ENCODE measurements at regions of chr1 and their contacts with region 1.

Region 1: GRCh38 chr1:205658943-205659581 is 21.2 kb downstream of the SLC45A3 start:
- DNase-seq: no peak
- H3K4me3 ChIP-seq: no peak overlapping the region
- H3K27ac ChIP-seq: no peak overlapping the region
- H3K4me1 ChIP-seq: peaks cover 5 to 7% (median 7%) of the 10 kb centered on the region in 4 donors
- H3K27me3 ChIP-seq: no peaks in the 10 kb centered on the region
- CTCF ChIP-seq: peak; percentile 75 to 95 (median 84)
- EP300 ChIP-seq: no peak
- POLR2A ChIP-seq: no peak

Region 2: DNA sequence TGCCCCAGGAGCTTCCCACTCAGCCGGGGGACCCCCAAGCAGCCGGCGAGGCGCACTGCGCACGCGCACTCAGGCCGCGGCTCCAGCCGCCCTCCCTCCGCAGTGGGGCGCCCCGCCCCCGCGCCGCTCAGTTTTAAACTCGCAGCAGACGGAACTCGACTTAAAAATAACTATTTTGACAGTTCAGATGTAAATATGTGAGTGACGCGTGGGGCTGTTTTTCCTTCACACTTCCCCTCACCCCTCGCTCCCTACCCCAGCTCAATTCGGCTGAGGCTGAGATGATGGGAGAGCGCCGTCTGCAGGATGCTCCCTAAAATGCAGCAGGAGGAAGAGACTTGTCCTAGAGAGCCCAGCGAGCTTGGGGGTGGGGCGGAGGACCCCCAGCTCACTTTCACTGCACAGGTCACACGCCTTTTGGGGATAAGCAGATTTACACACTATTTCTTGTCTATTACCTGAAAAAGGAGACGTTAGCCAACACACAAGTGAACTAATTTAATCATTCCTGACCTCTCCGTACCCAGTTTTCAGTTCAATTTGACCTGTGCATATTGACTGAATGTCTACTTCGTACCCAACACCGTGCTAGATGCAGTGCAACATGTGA is 228.3 kb before region 1 on chr1:
- intact Hi-C with region 1: no loop called
- DNase-seq: no peak
- H3K4me3 ChIP-seq: peak overlapping the region; percentile 53 to 60 (median 56)
- H3K27ac ChIP-seq: no peak overlapping the region
- H3K4me1 ChIP-seq: peaks cover 5 to 14% (median 12%) of the 10 kb centered on the region in 4 donors
- H3K27me3 ChIP-seq: peaks cover 0 to 17% (median 3%) of the 10 kb centered on the region in 4 donors
- CTCF ChIP-seq: peak; percentile 78 to 87 (median 80)
- EP300 ChIP-seq: no peak
- POLR2A ChIP-seq: no peak

Region 3: GRCh38 chr1:205528887-205529825 is 129.9 kb before region 1 on chr1:
- intact Hi-C with region 1: loop called (anchors 5 kb)
- DNase-seq: no peak
- H3K4me3 ChIP-seq: peak overlapping the region; percentile 46 to 59 (median 48)
- H3K27ac ChIP-seq: no peak overlapping the region
- H3K4me1 ChIP-seq: peaks cover 10 to 28% (median 11%) of the 10 kb centered on the region in 4 donors
- H3K27me3 ChIP-seq: peaks cover 0 to 9% (median 0%) of the 10 kb centered on the region in 4 donors
- CTCF ChIP-seq: peak; percentile 79 to 99 (median 87)
- EP300 ChIP-seq: no peak
- POLR2A ChIP-seq: no peak

Region 4: GRCh38 chr1:205591522-205592351 is 67.3 kb before region 1 on chr1:
- intact Hi-C with region 1: loop called (anchors 1 kb)
- DNase-seq: peak; percentile 98
- H3K4me3 ChIP-seq: peak overlapping the region; percentile 50 to 61 (median 54)
- H3K27ac ChIP-seq: peak overlapping the region in 3 of 4 donors; percentile 40 to 64 (median 44)
- H3K4me1 ChIP-seq: peaks cover 11 to 21% (median 16%) of the 10 kb centered on the region in 4 donors
- H3K27me3 ChIP-seq: no peaks in the 10 kb centered on the region
- CTCF ChIP-seq: peak; percentile 98
- EP300 ChIP-seq: no peak
- POLR2A ChIP-seq: no peak

Region 5: DNA sequence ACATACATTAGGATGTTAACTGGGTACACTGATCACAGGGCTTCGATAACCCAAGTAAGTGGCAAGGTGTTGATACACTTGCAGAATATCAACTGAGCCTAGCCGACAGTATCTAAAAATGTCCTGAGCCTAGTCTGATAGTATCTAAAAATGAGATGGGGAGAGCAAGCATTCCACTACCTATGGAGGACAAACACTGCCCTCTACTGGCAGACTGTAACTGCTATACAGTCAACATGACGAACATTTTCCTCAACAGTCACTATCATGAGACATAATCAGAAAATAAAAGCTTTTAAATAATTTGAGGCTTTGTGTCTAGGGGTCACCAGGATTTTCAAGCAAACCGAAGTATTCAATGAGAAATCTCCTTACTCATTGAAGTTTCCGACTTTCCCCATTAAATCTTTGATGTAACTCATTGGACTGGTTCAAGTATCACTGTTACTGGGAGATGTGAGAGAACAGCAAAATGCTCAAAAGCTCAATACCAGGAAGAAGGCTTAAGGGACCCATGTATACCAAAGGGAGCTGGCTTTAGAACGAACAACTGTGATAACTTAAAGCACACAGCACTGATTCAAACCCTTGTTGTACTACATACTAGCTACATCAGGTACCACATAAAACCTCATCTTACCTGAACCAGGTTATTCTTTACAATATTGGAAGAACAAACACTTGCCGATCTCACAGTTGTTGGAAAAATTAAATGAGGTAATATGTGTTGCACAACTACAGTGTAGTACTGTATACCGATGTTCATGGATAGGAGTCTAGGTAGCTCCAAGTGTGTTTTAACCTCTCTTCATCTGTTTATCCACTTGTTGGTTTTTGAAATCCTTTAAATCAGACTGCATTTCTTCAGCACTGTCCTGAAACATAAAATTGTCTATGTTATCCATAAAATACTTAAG is 52.3 kb after region 1 on chr1:
- intact Hi-C with region 1: loop called (anchors 1 kb)
- DNase-seq: no peak
- H3K4me3 ChIP-seq: no peak overlapping the region
- H3K27ac ChIP-seq: peak overlapping the region in 1 of 4 donors; percentile 19
- H3K4me1 ChIP-seq: peaks cover 16 to 34% (median 24%) of the 10 kb centered on the region in 4 donors
- H3K27me3 ChIP-seq: no peaks in the 10 kb centered on the region
- CTCF ChIP-seq: peak; percentile 79 to 91 (median 80)
- EP300 ChIP-seq: no peak
- POLR2A ChIP-seq: no peak

Region 6: DNA sequence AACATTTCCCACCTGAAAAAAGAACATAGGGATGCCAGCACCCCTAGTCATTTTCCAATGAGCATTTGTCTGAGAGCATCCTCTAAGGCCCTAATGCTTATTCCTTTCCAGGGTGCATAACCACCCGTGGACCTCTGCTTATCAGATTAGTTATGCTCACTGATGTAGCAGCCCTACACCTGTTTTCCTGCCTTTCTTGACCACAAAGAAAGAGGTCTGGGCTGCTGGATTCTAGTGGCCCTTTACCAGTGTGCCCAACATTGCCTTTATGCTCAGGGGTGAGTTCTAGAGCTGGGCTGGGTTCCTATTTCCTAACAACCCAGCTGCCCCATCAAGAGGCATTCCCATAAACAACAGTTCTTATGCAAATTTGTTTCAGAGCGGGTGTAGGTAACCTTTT is 211.2 kb after region 1 on chr1:
- intact Hi-C with region 1: no loop called
- DNase-seq: no peak
- H3K4me3 ChIP-seq: no peak overlapping the region
- H3K27ac ChIP-seq: no peak overlapping the region
- H3K4me1 ChIP-seq: no peaks in the 10 kb centered on the region
- H3K27me3 ChIP-seq: no peaks in the 10 kb centered on the region
- CTCF ChIP-seq: no peak
- EP300 ChIP-seq: no peak
- POLR2A ChIP-seq: no peak

Region 7: DNA sequence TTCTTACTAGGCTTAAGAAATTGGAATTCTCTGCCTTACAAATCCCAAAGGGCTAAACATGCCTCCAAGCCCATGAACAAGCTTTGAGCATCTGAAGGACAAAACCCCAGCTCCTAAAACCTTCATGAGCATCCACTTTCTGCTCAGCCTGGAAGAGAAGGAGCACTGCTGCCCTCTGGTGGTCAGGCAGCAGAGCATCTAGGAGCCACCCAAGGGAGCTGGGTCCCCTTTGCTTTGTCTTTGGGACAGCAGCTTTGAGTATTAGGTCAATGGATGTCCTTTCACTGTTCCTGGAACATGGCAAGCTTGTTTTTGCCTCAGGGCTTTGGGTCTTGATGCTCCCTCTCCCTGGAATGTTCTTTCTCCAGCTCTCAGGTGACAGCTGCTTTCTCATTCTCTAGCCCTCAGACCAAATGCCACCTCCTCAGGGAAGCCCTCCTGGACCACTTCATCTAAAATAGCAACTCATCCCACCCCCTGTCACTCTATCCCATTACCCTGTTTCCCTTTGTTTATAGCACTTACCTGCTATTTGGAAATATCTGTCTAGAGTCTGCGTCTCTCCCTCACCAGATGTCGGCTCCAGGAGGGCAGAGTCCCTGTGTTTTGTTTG is 318.4 kb after region 1 on chr1:
- intact Hi-C with region 1: loop called (anchors 2 kb)
- DNase-seq: no peak
- H3K4me3 ChIP-seq: no peak overlapping the region
- H3K27ac ChIP-seq: no peak overlapping the region
- H3K4me1 ChIP-seq: peaks cover 0 to 19% (median 3%) of the 10 kb centered on the region in 4 donors
- H3K27me3 ChIP-seq: peaks cover 0 to 5% (median 0%) of the 10 kb centered on the region in 4 donors
- CTCF ChIP-seq: peak; percentile 90 to 96 (median 96)
- EP300 ChIP-seq: no peak
- POLR2A ChIP-seq: no peak